ENCODE measurements at regions of chr3 and their contacts with region 1.

Region 1: GRCh38 chr3:123258811-123259420 is 57.2 kb downstream of the SEC22A start:
- DNase-seq: no peak
- ATAC-seq: peak in 2 of 4 donors; percentile 53 to 76
- H3K4me3 ChIP-seq: no peak overlapping the region
- H3K27ac ChIP-seq: no peak overlapping the region
- H3K4me1 ChIP-seq: no peaks in the 10 kb centered on the region
- H3K27me3 ChIP-seq: no peaks in the 10 kb centered on the region
- CTCF ChIP-seq: peak; percentile 62

Region 2: DNA sequence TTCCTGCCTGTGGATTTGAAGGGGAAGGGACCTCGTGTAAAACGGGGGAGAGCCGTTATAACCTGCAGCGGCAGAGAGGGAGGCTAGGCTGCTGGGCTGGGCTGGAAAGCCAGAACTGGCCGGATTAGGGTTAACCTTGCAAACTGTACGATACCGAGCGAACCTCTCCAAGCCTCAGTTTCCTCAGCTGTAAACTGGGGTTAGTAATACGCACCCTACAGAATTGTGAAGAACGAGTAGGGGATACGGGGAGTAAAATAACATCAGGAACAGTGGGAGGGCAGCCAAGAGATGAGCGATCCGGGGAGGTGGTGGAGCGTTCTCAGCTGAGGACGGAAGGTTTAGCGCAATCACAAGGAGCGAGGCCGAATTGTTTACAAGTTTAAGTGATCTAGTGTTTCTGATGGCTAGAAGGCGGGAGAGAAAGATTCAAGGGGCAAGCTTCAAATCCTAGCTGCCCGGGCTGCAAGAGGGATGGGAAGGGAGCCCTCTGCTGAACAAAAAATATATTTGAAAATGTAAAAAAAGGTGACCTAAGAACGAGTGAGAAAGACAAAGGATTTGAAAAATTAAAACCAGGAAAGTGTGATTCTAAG is 230.6 kb before region 1 on chr3:
- intact Hi-C with region 1: loop called in 1 of 2 experiments (anchors 5 kb)
- DNase-seq: peak in 1 of 2 donors; percentile 17
- ATAC-seq: peak; percentile 28 to 67 (median 46)
- H3K4me3 ChIP-seq: peak overlapping the region; percentile 74
- H3K27ac ChIP-seq: no peak overlapping the region
- H3K4me1 ChIP-seq: peaks cover 10% of the 10 kb centered on the region
- H3K27me3 ChIP-seq: peaks cover 0 to 83% (median 18%) of the 10 kb centered on the region in 3 donors
- CTCF ChIP-seq: peak; percentile 49